ENCODE measurements at regions of chr11 and their contacts with region 1.

Region 1: GRCh38 chr11:114197799-114198500 is 98.2 kb upstream of the NNMT start:
- DNase-seq: no peak
- ATAC-seq: no peak
- H3K4me3 ChIP-seq: no peak overlapping the region
- H3K4me3 Mint-ChIP-seq: no peak overlapping the region
- H3K27ac ChIP-seq: peak overlapping the region; percentile 21
- H3K27ac Mint-ChIP-seq: peak overlapping the region; percentile 86 to 88
- H3K4me1 ChIP-seq: peaks cover 43% of the 10 kb centered on the region
- H3K4me1 Mint-ChIP-seq: peaks cover 56 to 66% of the 10 kb centered on the region in 2 donors
- H3K27me3 ChIP-seq: no peaks in the 10 kb centered on the region
- H3K27me3 Mint-ChIP-seq: no peaks in the 10 kb centered on the region
- CTCF ChIP-seq: no peak

Region 2: GRCh38 chr11:114236829-114237228 is 38.9 kb after region 1 on chr11:
- intact Hi-C with region 1: loop called (anchors 5 kb)
- DNase-seq: no peak
- ATAC-seq: no peak
- H3K4me3 ChIP-seq: no peak overlapping the region
- H3K4me3 Mint-ChIP-seq: no peak overlapping the region
- H3K27ac ChIP-seq: no peak overlapping the region
- H3K27ac Mint-ChIP-seq: peak overlapping the region; percentile 65 to 69
- H3K4me1 ChIP-seq: peaks cover 12% of the 10 kb centered on the region
- H3K4me1 Mint-ChIP-seq: peaks cover 56 to 74% of the 10 kb centered on the region in 2 donors
- H3K27me3 ChIP-seq: no peaks in the 10 kb centered on the region
- H3K27me3 Mint-ChIP-seq: no peaks in the 10 kb centered on the region
- CTCF ChIP-seq: no peak

Region 3: GRCh38 chr11:115409691-115410220 is 1211.8 kb after region 1 on chr11:
- intact Hi-C with region 1: no loop called
- DNase-seq: no peak
- ATAC-seq: no peak
- H3K4me3 ChIP-seq: no peak overlapping the region
- H3K4me3 Mint-ChIP-seq: no peak overlapping the region
- H3K27ac ChIP-seq: no peak overlapping the region
- H3K27ac Mint-ChIP-seq: no peak overlapping the region
- H3K4me1 ChIP-seq: no peaks in the 10 kb centered on the region
- H3K4me1 Mint-ChIP-seq: no peaks in the 10 kb centered on the region
- H3K27me3 ChIP-seq: peaks cover 2% of the 10 kb centered on the region
- H3K27me3 Mint-ChIP-seq: peaks cover 6 to 7% of the 10 kb centered on the region in 2 donors
- CTCF ChIP-seq: no peak

Measured in natural killer cell (primary cell).